Mammary epithelial cell (primary cell): ENCODE measurements at regions of chr13 and their contacts with region 1.

Region 1: GRCh38 chr13:30802953-30803478 is 67.7 kb downstream of the ALOX5AP start:
- DNase-seq: peak; percentile 77
- H3K4me3 ChIP-seq: peak overlapping the region in 1 of 3 experiments; percentile 40
- H3K27ac ChIP-seq: no peak overlapping the region
- H3K4me1 ChIP-seq: peaks cover 45% of the 10 kb centered on the region
- H3K27me3 ChIP-seq: no peaks in the 10 kb centered on the region
- CTCF ChIP-seq: peak; percentile 76 to 95

Region 2: DNA sequence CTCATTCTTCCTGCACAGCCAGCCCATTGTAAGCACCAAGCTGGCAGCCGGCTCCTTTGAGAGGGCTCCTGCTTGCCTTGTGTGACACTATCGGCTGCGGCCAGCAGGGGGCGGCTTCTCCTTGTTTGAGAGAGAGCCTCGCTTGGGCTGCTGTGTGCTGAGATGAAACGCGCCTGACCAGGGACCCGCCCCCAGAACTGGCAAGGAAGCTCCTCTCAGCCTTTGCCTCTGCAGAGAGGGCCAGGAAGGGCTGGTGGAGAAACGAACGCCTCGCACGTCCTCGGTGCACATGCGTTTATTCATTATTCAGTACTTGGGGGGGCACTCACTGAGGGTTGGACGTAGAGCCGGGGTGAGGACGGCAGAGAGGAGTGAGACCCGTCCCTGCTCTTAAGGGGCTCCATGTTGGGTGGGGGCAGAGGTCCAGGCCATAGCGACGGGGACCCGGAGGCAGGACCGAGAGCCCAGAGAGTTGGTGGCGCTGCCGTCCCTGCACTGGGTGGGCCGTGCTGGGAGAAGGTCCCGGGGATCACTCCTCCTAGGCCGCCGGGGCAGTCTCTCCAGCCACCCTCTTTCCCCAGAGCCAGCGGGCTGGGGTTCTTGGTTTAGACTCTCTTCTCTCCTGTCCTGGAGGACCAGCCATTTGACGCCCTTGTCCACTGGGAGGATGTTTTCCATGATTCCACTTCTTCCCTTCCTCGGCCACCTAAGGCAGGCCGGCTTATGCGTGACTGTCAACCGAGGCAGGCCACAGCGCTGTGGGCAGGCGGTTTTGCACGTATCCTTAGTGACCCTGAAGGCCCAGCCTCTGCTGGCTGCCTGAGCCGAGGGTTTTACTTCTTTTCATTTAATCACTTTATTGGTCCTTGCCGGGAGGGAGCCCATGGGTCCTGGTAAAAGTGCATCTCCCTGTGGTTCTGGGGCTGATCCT is 670.1 kb before region 1 on chr13:
- CTCF ChIA-PET with region 1: no interaction called
- dilution Hi-C with region 1: loop called (anchors 5 kb)
- in situ Hi-C with region 1: no loop called
- intact Hi-C with region 1: loop called (anchors 1 kb)
- DNase-seq: peak; percentile 74
- H3K4me3 ChIP-seq: no peak overlapping the region
- H3K27ac ChIP-seq: no peak overlapping the region
- H3K4me1 ChIP-seq: peaks cover 3% of the 10 kb centered on the region
- H3K27me3 ChIP-seq: no peaks in the 10 kb centered on the region
- CTCF ChIP-seq: peak; percentile 63 to 89

Region 3: DNA sequence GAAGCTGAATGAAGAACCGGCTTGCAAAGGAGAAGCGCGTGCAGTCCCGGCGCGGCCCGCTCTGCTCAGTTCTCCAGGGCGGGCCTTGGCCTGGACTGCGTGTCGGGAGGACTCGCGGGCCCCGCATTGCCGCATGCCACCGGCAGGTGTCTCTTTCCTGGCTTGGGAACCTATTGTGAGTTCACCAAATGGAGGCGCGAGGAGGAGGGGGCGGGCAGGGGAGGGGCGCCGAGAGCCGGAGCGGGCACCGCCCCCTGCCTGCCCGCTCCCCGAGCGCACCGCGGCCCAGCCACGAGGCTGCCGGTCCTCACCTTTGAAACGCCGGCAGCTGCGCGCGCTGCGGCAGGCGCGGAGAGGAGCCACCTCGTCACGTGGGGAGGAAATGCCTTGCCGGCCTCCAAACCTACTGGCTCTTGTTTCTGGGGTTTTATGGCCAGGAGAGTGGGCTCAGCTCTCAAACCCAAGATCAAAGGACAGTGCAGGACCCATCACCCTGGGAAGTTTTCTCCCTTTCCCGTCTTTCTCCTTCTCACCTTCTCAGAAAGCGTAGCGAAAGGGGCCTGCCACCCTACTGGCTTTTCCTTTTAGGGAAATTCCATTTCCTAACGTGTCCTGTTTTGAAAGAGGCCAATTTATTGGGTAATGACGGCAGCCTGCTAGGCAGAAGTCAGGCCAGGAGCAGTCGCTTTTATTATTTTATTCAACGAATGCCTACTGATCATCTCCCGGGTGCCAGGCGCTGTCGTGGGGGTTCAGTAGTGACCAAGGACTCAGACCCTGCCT is 394.5 kb before region 1 on chr13:
- CTCF ChIA-PET with region 1: no interaction called
- dilution Hi-C with region 1: no loop called
- in situ Hi-C with region 1: no loop called
- intact Hi-C with region 1: loop called (anchors 1 kb)
- DNase-seq: peak; percentile 73
- H3K4me3 ChIP-seq: peak overlapping the region in 1 of 3 experiments; percentile 24
- H3K27ac ChIP-seq: peak overlapping the region; percentile 23
- H3K4me1 ChIP-seq: peaks cover 17% of the 10 kb centered on the region
- H3K27me3 ChIP-seq: no peaks in the 10 kb centered on the region
- CTCF ChIP-seq: peak; percentile 36 to 75

Region 4: GRCh38 chr13:30673669-30674521 is 129.1 kb before region 1 on chr13:
- CTCF ChIA-PET with region 1: no interaction called
- dilution Hi-C with region 1: loop called (anchors 10 kb)
- in situ Hi-C with region 1: loop called in 1 of 2 experiments (anchors 5 kb)
- intact Hi-C with region 1: loop called (anchors 1 kb)
- DNase-seq: peak; percentile 81
- H3K4me3 ChIP-seq: peak overlapping the region; percentile 23 to 56 (median 52)
- H3K27ac ChIP-seq: no peak overlapping the region
- H3K4me1 ChIP-seq: peaks cover 9% of the 10 kb centered on the region
- H3K27me3 ChIP-seq: no peaks in the 10 kb centered on the region
- CTCF ChIP-seq: peak; percentile 37 to 49

Region 5: DNA sequence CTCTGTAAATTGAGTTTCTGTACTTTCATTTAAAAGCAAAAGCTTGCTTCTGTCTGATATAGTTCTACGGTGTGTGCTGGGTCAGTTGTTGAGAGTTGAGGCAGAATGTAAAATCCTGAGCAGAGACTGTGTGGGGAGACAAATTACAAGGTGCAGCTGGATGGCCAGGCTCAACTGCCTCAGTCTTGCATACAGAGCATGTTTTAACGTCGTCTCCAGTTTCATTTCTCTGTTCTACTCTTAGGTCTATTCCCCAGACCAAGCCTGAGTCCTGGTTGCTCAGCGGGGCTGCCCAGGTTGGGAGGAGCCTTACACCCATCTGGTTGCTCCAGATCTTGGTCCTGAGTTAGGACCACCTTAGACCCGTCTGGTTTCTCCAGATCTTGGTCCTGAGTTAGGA is 48.7 kb after region 1 on chr13:
- CTCF ChIA-PET with region 1: no interaction called
- dilution Hi-C with region 1: loop called (anchors 5 kb)
- in situ Hi-C with region 1: no loop called
- intact Hi-C with region 1: no loop called
- DNase-seq: no peak
- H3K4me3 ChIP-seq: no peak overlapping the region
- H3K27ac ChIP-seq: no peak overlapping the region
- H3K4me1 ChIP-seq: peaks cover 3% of the 10 kb centered on the region
- H3K27me3 ChIP-seq: no peaks in the 10 kb centered on the region
- CTCF ChIP-seq: no peak

Region 6: DNA sequence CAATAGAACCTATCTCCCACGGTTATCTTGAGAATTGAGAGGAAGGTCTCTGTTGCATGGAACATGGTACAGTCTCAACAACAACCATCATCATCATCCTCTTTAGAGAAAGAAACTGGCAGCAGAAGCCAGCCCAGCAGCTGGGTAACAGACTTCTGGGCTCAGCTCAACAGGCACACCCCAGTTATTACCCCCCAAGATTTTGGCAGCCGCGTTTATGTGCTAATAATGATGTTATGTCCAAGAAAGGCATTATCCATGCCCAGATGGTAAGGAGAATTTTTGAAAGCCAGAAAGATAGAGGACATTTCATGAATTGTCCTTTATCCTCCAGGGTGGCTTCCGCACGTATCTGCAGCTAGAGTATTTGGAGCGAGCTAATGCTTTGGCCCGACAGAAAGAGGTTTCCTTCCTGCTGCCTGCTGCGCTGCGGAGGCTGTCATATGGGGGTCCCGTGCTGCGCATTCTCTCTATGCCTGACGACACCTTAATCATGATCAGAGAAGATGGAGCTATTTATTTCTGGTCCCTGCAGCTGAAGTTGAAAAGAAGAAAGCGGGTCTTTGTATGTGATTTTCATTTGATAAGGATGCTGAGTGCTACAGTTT is 219.4 kb after region 1 on chr13:
- CTCF ChIA-PET with region 1: no interaction called
- dilution Hi-C with region 1: loop called (anchors 5 kb)
- in situ Hi-C with region 1: no loop called
- intact Hi-C with region 1: no loop called
- DNase-seq: no peak
- H3K4me3 ChIP-seq: no peak overlapping the region
- H3K27ac ChIP-seq: no peak overlapping the region
- H3K4me1 ChIP-seq: peaks cover 5% of the 10 kb centered on the region
- H3K27me3 ChIP-seq: no peaks in the 10 kb centered on the region
- CTCF ChIP-seq: no peak

Region 7: DNA sequence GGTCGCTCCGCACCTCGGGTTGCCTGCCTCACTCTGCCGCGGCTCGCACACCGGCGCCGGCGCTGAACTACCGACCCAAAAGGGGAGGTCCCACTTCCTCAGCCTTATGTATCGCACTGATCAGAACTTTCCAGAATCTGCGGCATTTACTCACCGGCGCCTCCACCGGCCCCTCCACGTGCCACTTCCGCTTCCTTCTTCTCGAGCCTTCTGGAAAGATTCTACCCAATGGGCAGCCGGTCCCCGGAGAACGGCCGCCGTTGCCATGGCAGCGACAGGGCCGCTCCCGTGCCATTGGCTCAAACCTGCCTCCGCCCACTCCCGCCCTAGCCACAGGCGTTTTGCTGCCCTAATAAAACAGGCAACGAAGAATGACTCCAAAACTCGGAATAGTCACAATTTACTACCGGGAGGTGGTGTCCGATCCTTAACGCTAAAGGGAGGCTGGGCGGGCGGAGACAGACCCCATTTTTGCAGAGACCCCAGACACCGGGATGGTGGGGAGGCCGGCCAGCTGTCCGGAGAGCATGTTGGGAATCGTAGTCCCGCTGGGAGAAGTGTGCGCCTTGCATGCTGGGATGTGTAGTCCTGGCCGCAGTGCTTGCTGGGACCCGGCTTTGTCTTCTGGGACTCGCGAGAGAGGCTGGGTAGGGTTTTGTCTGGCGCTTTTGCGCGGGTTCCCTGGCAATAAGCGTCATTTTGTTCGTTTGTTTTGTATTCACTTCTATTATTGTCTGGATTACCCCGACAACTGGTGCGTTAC is 359.0 kb after region 1 on chr13 and contains the start of gene HSPH1:
- CTCF ChIA-PET with region 1: no interaction called
- dilution Hi-C with region 1: no loop called
- in situ Hi-C with region 1: no loop called
- intact Hi-C with region 1: loop called (anchors 5 kb)
- DNase-seq: peak; percentile 99
- H3K4me3 ChIP-seq: peak within 1 kb of the TSS; percentile 81 to 90 (median 84)
- H3K27ac ChIP-seq: peak within 1 kb of the TSS; percentile 97
- H3K4me1 ChIP-seq: peaks cover 7% of the 10 kb centered on the region
- H3K27me3 ChIP-seq: no peaks in the 10 kb centered on the region
- CTCF ChIP-seq: peak in 1 of 2 donors; percentile 35
- total RNA-seq, gene HSPH1: 49.0 to 113 TPM